Panc1 (cell line): ENCODE measurements at regions of chr3 and their contacts with region 1.

Region 1: GRCh38 chr3:173734895-173735294 is 337.4 kb downstream of the NLGN1 start:
- DNase-seq: no peak
- ATAC-seq: no peak
- H3K4me3 ChIP-seq: no peak overlapping the region
- H3K27ac ChIP-seq: no peak overlapping the region
- H3K4me1 ChIP-seq: no peaks in the 10 kb centered on the region
- H3K27me3 ChIP-seq: no peaks in the 10 kb centered on the region
- CTCF ChIP-seq: no peak

Region 2: DNA sequence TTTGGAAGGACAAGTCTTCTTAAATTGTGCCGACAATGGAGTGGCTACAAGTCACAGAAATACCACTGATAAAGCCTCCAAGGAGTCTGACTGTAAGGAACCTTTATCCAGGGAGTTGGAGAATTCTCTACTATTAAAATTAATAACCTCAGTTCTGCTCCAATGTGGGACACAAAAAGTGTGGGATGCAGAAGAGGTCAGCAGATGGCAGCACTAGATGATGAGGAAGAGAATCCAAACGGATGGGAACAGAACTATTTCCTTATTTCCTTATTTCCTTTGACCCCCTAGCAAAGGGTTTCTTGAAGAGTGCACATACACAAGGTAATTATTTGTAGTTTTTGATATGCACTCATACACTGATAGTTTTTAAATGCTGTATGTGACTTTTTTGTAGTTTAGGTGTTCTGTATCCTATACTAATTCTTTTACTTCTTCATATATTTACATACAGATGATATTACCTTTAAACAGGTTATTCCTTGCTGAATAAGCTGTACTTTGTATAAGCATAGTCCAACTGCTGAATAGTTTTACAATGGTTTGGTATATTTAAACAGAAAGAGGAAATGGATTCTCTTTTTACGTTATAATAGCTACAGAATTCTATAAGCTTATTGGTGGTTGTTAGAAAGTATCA is 362.9 kb before region 1 on chr3:
- CTCF ChIA-PET with region 1: no interaction called
- POLR2A ChIA-PET with region 1: no interaction called
- in situ Hi-C with region 1: no loop called
- intact Hi-C with region 1: loop called (anchors 1 kb)
- DNase-seq: no peak
- ATAC-seq: peak; percentile 78
- H3K4me3 ChIP-seq: no peak overlapping the region
- H3K27ac ChIP-seq: no peak overlapping the region
- H3K4me1 ChIP-seq: no peaks in the 10 kb centered on the region
- H3K27me3 ChIP-seq: no peaks in the 10 kb centered on the region
- CTCF ChIP-seq: peak; percentile 75

Region 3: GRCh38 chr3:173635826-173636225 is 99.1 kb before region 1 on chr3:
- CTCF ChIA-PET with region 1: no interaction called
- POLR2A ChIA-PET with region 1: no interaction called
- in situ Hi-C with region 1: no loop called
- intact Hi-C with region 1: no loop called
- DNase-seq: no peak
- ATAC-seq: no peak
- H3K4me3 ChIP-seq: no peak overlapping the region
- H3K27ac ChIP-seq: no peak overlapping the region
- H3K4me1 ChIP-seq: no peaks in the 10 kb centered on the region
- H3K27me3 ChIP-seq: no peaks in the 10 kb centered on the region
- CTCF ChIP-seq: no peak

Region 4: DNA sequence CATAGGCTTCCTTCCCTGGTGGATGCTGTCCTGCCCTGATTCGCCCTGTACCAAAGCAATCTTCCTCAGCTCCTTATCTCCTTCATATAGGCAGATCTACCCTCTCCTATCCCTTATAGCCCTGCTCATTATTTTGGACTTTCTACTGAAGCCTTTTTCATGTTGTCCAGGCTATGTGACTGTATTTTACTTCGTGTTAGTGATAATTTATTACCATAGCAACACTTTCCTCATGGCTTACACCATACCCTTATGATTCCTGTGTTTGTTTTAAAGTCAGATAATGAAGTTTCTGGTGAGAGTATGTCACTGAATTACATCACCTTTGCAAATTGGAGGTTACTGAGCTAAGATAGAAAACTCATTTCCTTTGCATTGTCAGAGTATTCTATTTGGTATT is 15.2 kb after region 1 on chr3:
- CTCF ChIA-PET with region 1: no interaction called
- POLR2A ChIA-PET with region 1: no interaction called
- in situ Hi-C with region 1: no loop called
- intact Hi-C with region 1: no loop called
- DNase-seq: no peak
- ATAC-seq: no peak
- H3K4me3 ChIP-seq: no peak overlapping the region
- H3K27ac ChIP-seq: no peak overlapping the region
- H3K4me1 ChIP-seq: no peaks in the 10 kb centered on the region
- H3K27me3 ChIP-seq: no peaks in the 10 kb centered on the region
- CTCF ChIP-seq: no peak